ENCODE measurements at regions of chr2 and their contacts with region 1.

Region 1: GRCh38 chr2:170409164-170409535 is 231.2 kb downstream of the MYO3B start:
- DNase-seq: peak; percentile 52 to 69 (median 62)
- H3K4me3 ChIP-seq: no peak overlapping the region
- H3K4me3 Mint-ChIP-seq: peak overlapping the region; percentile 2 to 79 (median 52)
- H3K27ac ChIP-seq: no peak overlapping the region
- H3K27ac Mint-ChIP-seq: peak overlapping the region in 2 of 7 donors; percentile 27 to 91
- H3K4me1 ChIP-seq: peaks cover 7% of the 10 kb centered on the region
- H3K4me1 Mint-ChIP-seq: peaks cover 3 to 7% (median 6%) of the 10 kb centered on the region in 4 donors
- H3K27me3 ChIP-seq: peaks cover 13% of the 10 kb centered on the region
- H3K27me3 Mint-ChIP-seq: peaks cover 17 to 33% of the 10 kb centered on the region in 2 donors

Region 2: GRCh38 chr2:169977530-169977929 is 431.6 kb before region 1 on chr2:
- CTCF ChIA-PET with region 1: no interaction called
- POLR2A ChIA-PET with region 1: no interaction called
- intact Hi-C with region 1: no loop called
- DNase-seq: no peak
- H3K4me3 ChIP-seq: no peak overlapping the region
- H3K4me3 Mint-ChIP-seq: no peak overlapping the region
- H3K27ac ChIP-seq: no peak overlapping the region
- H3K27ac Mint-ChIP-seq: no peak overlapping the region
- H3K4me1 ChIP-seq: no peaks in the 10 kb centered on the region
- H3K4me1 Mint-ChIP-seq: peaks cover 10 to 12% (median 11%) of the 10 kb centered on the region in 4 donors
- H3K27me3 ChIP-seq: no peaks in the 10 kb centered on the region
- H3K27me3 Mint-ChIP-seq: no peaks in the 10 kb centered on the region

Region 3: GRCh38 chr2:170361090-170361936 is 47.8 kb before region 1 on chr2:
- CTCF ChIA-PET with region 1: interaction called, 13 read pairs
- POLR2A ChIA-PET with region 1: no interaction called
- intact Hi-C with region 1: loop called (anchors 2 kb)
- DNase-seq: peak in 4 of 5 donors; percentile 34 to 46 (median 42)
- H3K4me3 ChIP-seq: no peak overlapping the region
- H3K4me3 Mint-ChIP-seq: no peak overlapping the region
- H3K27ac ChIP-seq: no peak overlapping the region
- H3K27ac Mint-ChIP-seq: no peak overlapping the region
- H3K4me1 ChIP-seq: peaks cover 4% of the 10 kb centered on the region
- H3K4me1 Mint-ChIP-seq: peaks cover 4 to 12% (median 8%) of the 10 kb centered on the region in 4 donors
- H3K27me3 ChIP-seq: peaks cover 3% of the 10 kb centered on the region
- H3K27me3 Mint-ChIP-seq: peaks cover 13 to 23% of the 10 kb centered on the region in 2 donors

Region 4: DNA sequence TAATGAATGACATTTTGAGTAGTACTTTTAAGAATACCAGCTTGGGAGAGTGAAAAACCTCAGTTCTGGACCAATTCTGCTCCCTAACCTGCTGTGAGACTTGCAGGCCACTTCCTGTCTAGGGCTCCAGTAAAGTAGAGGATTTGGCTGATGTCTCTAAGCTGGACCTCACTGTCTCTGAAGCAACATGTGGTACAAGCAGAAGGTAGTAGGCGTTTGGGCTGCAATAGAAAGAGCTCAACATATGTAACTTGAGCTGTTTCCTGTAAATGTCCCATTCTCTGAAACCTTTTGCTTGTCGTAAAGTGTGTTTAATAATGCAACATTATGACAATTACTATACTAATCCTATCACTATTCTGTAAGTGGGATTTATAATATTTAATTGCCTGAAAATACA is 18.1 kb before region 1 on chr2:
- CTCF ChIA-PET with region 1: interaction called, 13 read pairs
- POLR2A ChIA-PET with region 1: no interaction called
- intact Hi-C with region 1: no loop called
- DNase-seq: no peak
- H3K4me3 ChIP-seq: no peak overlapping the region
- H3K4me3 Mint-ChIP-seq: no peak overlapping the region
- H3K27ac ChIP-seq: no peak overlapping the region
- H3K27ac Mint-ChIP-seq: no peak overlapping the region
- H3K4me1 ChIP-seq: no peaks in the 10 kb centered on the region
- H3K4me1 Mint-ChIP-seq: no peaks in the 10 kb centered on the region
- H3K27me3 ChIP-seq: no peaks in the 10 kb centered on the region
- H3K27me3 Mint-ChIP-seq: peaks cover 38 to 40% of the 10 kb centered on the region in 2 donors

Region 5: GRCh38 chr2:170425281-170425751 is 16.2 kb after region 1 on chr2:
- CTCF ChIA-PET with region 1: interaction called, 36 read pairs
- POLR2A ChIA-PET with region 1: no interaction called
- intact Hi-C with region 1: no loop called
- DNase-seq: no peak
- H3K4me3 ChIP-seq: no peak overlapping the region
- H3K4me3 Mint-ChIP-seq: no peak overlapping the region
- H3K27ac ChIP-seq: no peak overlapping the region
- H3K27ac Mint-ChIP-seq: no peak overlapping the region
- H3K4me1 ChIP-seq: no peaks in the 10 kb centered on the region
- H3K4me1 Mint-ChIP-seq: no peaks in the 10 kb centered on the region
- H3K27me3 ChIP-seq: no peaks in the 10 kb centered on the region
- H3K27me3 Mint-ChIP-seq: peaks cover 7 to 13% of the 10 kb centered on the region in 2 donors

Region 6: DNA sequence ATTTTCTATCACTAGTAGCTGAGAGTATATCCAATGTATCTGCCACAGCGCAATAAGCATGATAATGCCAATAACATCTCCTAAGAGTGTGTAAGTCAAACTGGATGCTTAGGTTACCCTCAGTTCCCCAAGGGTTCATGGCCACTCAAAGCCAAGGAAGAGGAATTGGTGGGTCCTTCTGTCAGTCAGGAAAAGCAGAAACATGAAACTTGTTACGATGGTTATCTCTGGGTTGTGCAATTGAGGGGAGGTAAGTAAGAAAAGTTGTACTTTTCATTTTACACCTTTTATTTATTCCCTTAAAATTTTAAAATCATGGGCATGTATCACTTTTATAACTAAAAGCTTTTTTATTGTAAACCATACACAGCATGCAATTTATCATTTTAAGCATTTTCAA is 397.4 kb after region 1 on chr2:
- CTCF ChIA-PET with region 1: interaction called, 144 read pairs
- POLR2A ChIA-PET with region 1: no interaction called
- intact Hi-C with region 1: no loop called
- DNase-seq: no peak
- H3K4me3 ChIP-seq: no peak overlapping the region
- H3K4me3 Mint-ChIP-seq: no peak overlapping the region
- H3K27ac ChIP-seq: no peak overlapping the region
- H3K27ac Mint-ChIP-seq: no peak overlapping the region
- H3K4me1 ChIP-seq: no peaks in the 10 kb centered on the region
- H3K4me1 Mint-ChIP-seq: no peaks in the 10 kb centered on the region
- H3K27me3 ChIP-seq: no peaks in the 10 kb centered on the region
- H3K27me3 Mint-ChIP-seq: peaks cover 3 to 6% of the 10 kb centered on the region in 2 donors